ENCODE measurements at regions of chr11 and their contacts with region 1.

Region 1: DNA sequence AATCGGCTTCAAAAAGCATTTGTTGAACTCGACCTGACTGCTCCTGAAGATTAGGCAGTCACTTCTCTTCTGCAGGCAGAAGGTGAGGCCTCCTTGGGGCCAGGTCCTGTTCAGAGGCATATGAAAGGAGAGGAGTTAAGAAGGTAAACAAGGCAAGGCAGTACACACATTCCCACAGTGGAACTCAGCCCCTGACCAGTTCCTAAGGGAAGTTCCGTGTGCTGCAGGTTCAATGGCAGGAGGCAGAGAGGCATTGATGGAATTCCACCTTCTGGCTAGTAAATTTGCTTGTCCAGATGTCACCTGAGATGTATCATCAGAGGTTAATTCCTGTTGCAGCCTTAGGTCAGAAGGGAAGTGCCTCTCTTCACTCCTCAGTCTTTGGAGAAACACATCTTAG is 337.0 kb upstream of the MTNR1B start:
- DNase-seq: no peak
- H3K4me3 ChIP-seq: no peak overlapping the region
- H3K27ac ChIP-seq: no peak overlapping the region
- H3K4me1 ChIP-seq: no peaks in the 10 kb centered on the region
- H3K27me3 ChIP-seq: no peaks in the 10 kb centered on the region
- CTCF ChIP-seq: no peak
- POLR2A ChIP-seq: no peak

Region 2: GRCh38 chr11:92687724-92688123 is 55.2 kb after region 1 on chr11:
- intact Hi-C with region 1: loop called (anchors 10 kb)
- DNase-seq: no peak
- H3K4me3 ChIP-seq: no peak overlapping the region
- H3K27ac ChIP-seq: no peak overlapping the region
- H3K4me1 ChIP-seq: no peaks in the 10 kb centered on the region
- H3K27me3 ChIP-seq: peaks cover 0 to 4% (median 0%) of the 10 kb centered on the region in 7 donors
- CTCF ChIP-seq: no peak
- POLR2A ChIP-seq: no peak